ENCODE measurements at regions of chr12 and their contacts with region 1.

Region 1: GRCh38 chr12:42129595-42130204 is 15.0 kb downstream of the GXYLT1 start:
- DNase-seq: peak in 1 of 2 donors; percentile 40
- H3K4me3 ChIP-seq: no peak overlapping the region
- CTCF ChIP-seq: peak in 1 of 3 donors; percentile 28
- POLR2A ChIP-seq: no peak

Region 2: DNA sequence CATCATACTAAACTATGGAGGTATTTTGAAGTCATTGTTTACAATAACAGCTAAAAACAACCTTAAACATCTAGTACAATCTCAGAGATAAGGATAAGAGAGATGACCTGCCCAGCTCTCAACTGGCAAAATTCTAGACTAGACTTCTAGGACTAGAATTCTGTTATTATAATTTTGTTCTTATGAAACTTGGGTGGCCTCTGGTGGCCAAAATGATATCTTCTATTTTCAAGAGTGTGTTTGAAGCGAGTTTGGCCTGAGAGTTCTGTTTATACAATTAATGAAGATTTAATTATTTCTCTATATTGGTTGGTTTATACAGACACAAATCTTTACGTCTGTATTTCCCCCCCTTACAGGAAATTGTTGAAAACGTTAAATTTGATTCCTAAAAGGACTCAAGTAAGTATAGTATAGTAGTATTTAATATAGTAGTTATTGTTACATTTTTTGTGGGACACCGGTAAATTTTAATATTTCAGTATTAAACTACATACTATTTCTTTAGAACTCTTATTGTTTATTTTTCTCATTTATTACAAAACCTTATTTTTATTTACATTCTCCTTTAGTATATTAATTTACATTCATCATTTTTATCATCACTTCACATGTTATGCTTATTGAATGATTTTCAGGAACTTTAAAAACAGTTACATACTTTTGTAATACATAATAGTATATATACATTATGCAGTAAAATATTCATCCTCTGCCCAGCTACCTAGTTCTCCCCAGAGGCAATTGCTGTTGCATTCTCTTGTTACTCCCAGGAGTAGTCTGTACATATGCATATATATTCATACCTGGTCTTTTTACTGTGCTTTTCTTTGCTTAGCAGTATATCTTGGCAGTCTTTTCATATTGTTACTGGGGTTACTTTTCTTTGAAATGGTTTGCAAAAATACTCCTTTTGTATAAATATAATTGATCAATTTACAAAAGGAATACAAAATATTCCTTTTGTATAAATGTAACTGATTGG is 202.9 kb after region 1 on chr12:
- intact Hi-C with region 1: loop called (anchors 5 kb)
- DNase-seq: no peak
- H3K4me3 ChIP-seq: no peak overlapping the region
- CTCF ChIP-seq: no peak
- POLR2A ChIP-seq: no peak

Measured in lower leg skin (tissue), 4 donors.